ENCODE measurements at regions of chr20 and their contacts with region 1.

Region 1: DNA sequence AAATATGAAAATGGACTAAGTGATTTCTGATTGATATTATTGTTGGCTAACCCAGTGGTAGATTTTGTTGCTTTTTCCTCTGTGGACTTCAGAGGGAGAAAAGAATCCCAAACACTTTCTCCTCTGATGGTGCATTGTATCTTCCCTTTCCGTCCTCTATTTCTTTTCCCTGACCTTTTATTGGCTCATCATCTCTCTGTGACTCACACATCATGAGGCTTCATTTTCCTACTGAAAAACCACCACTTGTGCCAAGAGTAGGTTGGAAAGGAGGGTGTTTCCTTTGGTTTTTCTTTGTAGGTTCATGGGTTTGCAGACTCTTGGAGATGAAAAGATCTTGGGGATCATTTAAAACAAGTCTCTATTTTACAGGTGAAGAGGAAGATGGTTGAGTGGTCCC is 311.7 kb upstream of the JAG1 start:
- DNase-seq: no peak
- H3K4me3 ChIP-seq: no peak overlapping the region
- H3K27ac ChIP-seq: no peak overlapping the region
- H3K4me1 ChIP-seq: no peaks in the 10 kb centered on the region
- H3K27me3 ChIP-seq: no peaks in the 10 kb centered on the region
- CTCF ChIP-seq: no peak

Region 2: DNA sequence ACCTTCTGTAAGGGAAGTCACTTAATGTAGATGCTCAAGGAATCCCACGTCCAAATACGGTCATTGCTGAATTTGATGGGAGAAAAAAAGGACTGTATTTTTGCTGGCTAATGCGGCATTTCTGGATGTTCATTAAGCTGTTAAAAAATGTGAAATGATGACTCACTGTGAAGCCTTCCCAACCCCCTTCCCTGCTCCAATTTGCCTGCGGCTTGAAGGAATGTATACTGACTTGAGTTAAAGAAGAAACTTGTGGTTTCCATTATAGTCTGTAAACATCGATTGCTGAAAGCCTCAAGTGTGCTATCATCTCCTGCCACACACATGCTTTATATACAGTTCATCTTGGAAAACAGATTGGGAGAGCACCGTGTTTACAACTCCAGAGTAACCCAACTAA is 62.6 kb before region 1 on chr20:
- CTCF ChIA-PET with region 1: interaction called, 13 read pairs
- POLR2A ChIA-PET with region 1: no interaction called
- intact Hi-C with region 1: no loop called
- DNase-seq: peak; percentile 59 to 82
- H3K4me3 ChIP-seq: no peak overlapping the region
- H3K27ac ChIP-seq: peak overlapping the region; percentile 50
- H3K4me1 ChIP-seq: peaks cover 48% of the 10 kb centered on the region
- H3K27me3 ChIP-seq: no peaks in the 10 kb centered on the region
- CTCF ChIP-seq: no peak

Region 3: GRCh38 chr20:11015440-11015839 is 29.9 kb after region 1 on chr20:
- CTCF ChIA-PET with region 1: no interaction called
- POLR2A ChIA-PET with region 1: no interaction called
- intact Hi-C with region 1: no loop called
- DNase-seq: no peak
- H3K4me3 ChIP-seq: no peak overlapping the region
- H3K27ac ChIP-seq: no peak overlapping the region
- H3K4me1 ChIP-seq: peaks cover 6% of the 10 kb centered on the region; the same call in 1 of the 2 replicates
- H3K27me3 ChIP-seq: no peaks in the 10 kb centered on the region
- CTCF ChIP-seq: no peak

Region 4: GRCh38 chr20:11136691-11137090 is 151.2 kb after region 1 on chr20:
- CTCF ChIA-PET with region 1: interaction called, 11 read pairs
- POLR2A ChIA-PET with region 1: no interaction called
- intact Hi-C with region 1: no loop called
- DNase-seq: no peak
- H3K4me3 ChIP-seq: no peak overlapping the region
- H3K27ac ChIP-seq: no peak overlapping the region
- H3K4me1 ChIP-seq: 0 out of 2 replicates have a peak, but pooled peaks cover 5% of the 10 kb centered on the region
- H3K27me3 ChIP-seq: no peaks in the 10 kb centered on the region
- CTCF ChIP-seq: no peak

Region 5: DNA sequence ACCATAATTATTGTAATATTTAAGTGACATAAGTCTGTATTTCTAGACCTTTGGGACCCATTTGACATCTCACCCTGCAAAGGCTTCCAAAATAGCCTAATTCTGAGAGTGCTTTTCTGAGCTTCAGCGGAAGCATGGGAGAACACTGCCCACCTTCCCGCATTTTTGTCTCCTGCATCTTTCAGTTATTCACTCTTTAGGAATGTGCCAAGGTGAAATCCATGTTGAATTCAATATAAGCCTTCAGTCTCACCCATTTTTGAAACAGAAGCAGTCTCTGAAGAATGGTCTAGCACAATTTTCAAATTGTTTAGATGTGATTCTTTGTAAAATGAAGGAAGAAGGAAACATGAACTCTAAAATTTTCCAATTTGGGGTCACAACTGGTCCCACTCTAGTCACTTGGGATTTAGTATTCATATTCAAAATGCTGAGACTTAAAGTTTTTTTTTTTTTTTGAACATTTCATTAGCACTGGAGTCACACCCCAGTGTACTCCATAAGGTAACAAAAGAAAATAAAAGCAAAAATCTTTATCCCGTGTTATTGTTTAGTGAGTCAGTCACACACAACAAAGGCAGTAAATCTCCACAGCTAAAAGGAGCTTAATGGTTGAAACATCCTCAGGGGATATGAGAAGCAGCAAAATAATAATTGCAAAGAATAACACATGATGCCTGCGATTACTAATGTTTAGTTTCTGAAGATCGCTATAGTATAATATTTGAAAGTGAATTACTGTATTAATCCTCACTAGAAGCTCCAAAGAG is 452.3 kb after region 1 on chr20:
- CTCF ChIA-PET with region 1: no interaction called
- POLR2A ChIA-PET with region 1: interaction called, 11 read pairs
- intact Hi-C with region 1: no loop called
- DNase-seq: no peak
- H3K4me3 ChIP-seq: no peak overlapping the region
- H3K27ac ChIP-seq: no peak overlapping the region
- H3K4me1 ChIP-seq: no peaks in the 10 kb centered on the region
- H3K27me3 ChIP-seq: no peaks in the 10 kb centered on the region
- CTCF ChIP-seq: no peak

Measured in PC-9 (cell line).